Pancreas (tissue), 10 donors: ENCODE measurements at regions of chrX and their contacts with region 1.

Region 1: GRCh38 chrX:24395775-24396174 is 35.3 kb downstream of the SUPT20HL1 start:
- DNase-seq: peak in 3 of 6 donors; percentile 30 to 65 (median 42)
- ATAC-seq: peak; percentile 87 to 98 (median 96)
- H3K4me3 ChIP-seq: no peak overlapping the region
- H3K27ac ChIP-seq: peak overlapping the region in 1 of 4 donors; percentile 58
- H3K4me1 ChIP-seq: peaks cover 0 to 7% (median 5%) of the 10 kb centered on the region in 3 donors
- H3K27me3 ChIP-seq: no peaks in the 10 kb centered on the region
- CTCF ChIP-seq: peak; percentile 50 to 79 (median 62)

Region 2: DNA sequence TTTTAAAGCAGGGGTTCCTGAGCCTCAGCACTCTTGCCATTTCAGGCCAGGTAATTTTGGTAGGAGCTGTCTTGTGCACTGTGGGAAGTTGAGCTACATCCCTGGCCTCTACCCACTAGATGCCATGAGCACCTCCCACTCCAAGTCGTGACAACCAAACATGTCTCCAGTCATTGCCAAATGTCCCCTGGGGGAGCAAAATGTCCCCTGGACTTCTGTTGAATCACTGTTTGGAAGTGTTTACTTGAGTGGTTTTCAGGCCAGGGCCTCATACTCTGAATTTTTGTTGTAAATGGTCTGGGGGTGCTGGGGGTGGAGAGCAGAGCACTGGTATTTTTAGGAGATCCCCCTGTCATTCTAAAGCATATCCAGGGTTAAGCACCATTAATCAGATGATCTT is 72.5 kb after region 1 on chrX:
- intact Hi-C with region 1: no loop called
- DNase-seq: no peak
- ATAC-seq: no peak
- H3K4me3 ChIP-seq: no peak overlapping the region
- H3K27ac ChIP-seq: no peak overlapping the region
- H3K4me1 ChIP-seq: no peaks in the 10 kb centered on the region
- H3K27me3 ChIP-seq: no peaks in the 10 kb centered on the region
- CTCF ChIP-seq: no peak

Region 3: DNA sequence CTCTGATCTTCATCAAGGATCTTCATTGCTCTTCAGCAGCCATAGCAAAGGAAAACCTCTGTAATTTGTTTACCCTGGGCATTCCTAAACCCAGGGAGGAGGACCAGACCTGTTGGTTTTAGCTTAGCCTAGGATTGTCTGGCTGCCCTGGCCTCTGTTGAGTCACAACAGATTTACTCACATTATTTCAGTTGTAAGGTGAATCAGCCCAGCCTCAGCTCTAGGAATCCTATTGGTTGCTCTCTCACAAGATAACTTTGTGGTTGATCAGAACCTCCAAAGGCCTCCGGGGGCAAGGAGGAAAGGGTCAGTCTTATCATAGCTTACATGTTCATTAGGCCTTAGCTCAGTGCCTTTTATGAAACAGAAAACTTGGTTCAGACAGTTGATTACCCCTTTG is 110.3 kb after region 1 on chrX:
- intact Hi-C with region 1: loop called in 2 of 3 experiments (anchors 10 kb)
- DNase-seq: no peak
- ATAC-seq: no peak
- H3K4me3 ChIP-seq: no peak overlapping the region
- H3K27ac ChIP-seq: no peak overlapping the region
- H3K4me1 ChIP-seq: no peaks in the 10 kb centered on the region
- H3K27me3 ChIP-seq: peaks cover 0 to 5% (median 0%) of the 10 kb centered on the region in 4 donors
- CTCF ChIP-seq: no peak

Region 4: DNA sequence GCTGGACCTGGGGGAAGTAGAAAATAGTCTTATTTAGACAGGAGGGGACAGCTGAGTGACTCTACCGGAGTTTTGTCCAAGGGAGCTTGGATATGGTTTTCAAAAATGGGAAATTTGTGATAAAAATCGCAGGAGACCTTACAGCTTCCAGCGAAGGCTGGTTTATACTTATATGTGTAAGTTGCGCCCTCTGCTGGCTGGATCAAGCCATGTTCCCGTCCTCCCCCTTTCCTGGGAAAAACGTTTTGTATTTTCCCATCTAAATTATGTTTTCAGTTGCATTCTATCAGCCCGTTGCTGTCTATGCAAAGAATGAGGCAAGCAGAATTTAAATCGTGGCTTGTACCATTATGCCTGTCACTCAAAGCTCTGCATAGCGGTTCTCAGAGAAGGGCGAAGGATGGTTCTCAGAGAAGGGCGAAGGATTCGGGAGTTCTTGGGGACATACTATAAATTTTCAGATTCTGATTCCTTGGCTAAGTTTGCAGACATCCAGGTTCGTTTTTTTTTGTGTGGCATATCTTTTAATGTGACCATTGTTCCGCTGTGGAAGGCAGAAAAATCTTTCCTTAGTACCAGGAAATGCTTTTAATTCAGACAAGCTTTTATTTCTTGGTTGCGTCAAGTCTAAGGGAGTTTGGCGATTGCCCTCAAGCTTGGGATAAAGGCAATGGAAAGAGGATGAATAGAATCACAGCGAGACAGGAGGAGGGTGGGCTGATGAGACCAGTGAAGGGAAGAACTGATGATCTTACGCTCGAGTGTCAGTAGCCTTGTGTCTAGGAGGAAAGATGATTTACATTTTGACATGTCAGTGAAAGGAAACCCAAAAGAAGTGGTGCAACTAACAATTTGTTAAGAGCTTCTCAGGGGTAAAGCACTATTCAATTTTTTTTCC is 748.5 kb after region 1 on chrX:
- intact Hi-C with region 1: loop called in 1 of 3 experiments (anchors 10 kb)
- DNase-seq: peak; percentile 7 to 84 (median 52)
- ATAC-seq: peak; percentile 67 to 82 (median 76)
- H3K4me3 ChIP-seq: no peak overlapping the region
- H3K27ac ChIP-seq: no peak overlapping the region
- H3K4me1 ChIP-seq: no peaks in the 10 kb centered on the region
- H3K27me3 ChIP-seq: peaks cover 0 to 15% (median 4%) of the 10 kb centered on the region in 4 donors
- CTCF ChIP-seq: peak; percentile 54 to 77 (median 70)

Region 5: DNA sequence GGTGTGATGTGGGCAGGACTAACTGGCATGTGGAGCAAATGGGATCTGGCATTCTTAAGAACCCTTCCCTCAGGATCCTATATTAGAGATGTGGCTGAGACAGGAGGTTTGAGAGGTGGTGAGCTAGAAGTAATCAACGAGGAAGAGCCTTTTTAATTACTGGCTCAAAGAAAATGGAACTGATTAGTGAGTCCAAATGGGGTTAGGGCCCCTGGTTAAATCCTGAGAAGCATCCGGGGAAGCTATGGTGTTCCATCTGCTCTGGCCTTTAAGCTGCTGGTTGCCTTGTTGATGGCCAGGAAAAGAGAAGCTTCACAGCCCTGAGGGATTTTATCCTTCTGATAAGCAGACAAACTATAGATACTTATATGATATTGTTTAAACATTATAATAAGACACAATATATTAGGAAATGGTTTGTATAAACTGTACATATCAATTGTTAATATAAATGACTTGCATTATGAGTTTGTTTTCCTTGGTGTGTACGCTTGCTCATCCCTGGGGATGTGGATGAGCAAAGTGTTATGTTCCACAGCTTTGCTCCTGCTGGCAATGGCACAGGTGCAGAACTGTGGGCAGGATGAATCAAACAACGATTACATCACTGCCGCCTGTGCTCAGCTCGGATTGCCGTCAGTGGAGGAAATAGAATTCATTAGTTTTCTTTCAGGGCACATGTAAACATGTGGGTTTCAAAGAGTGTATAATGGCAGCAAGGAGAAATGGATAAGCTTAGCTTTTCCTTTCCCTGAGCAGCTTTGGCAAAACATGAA is 948.6 kb after region 1 on chrX:
- intact Hi-C with region 1: no loop called
- DNase-seq: no peak
- ATAC-seq: no peak
- H3K4me3 ChIP-seq: no peak overlapping the region
- H3K27ac ChIP-seq: no peak overlapping the region
- H3K4me1 ChIP-seq: no peaks in the 10 kb centered on the region
- H3K27me3 ChIP-seq: no peaks in the 10 kb centered on the region
- CTCF ChIP-seq: no peak